Left lung (tissue), 14 donors: ENCODE measurements at regions of chr2 and their contacts with region 1.

Region 1: DNA sequence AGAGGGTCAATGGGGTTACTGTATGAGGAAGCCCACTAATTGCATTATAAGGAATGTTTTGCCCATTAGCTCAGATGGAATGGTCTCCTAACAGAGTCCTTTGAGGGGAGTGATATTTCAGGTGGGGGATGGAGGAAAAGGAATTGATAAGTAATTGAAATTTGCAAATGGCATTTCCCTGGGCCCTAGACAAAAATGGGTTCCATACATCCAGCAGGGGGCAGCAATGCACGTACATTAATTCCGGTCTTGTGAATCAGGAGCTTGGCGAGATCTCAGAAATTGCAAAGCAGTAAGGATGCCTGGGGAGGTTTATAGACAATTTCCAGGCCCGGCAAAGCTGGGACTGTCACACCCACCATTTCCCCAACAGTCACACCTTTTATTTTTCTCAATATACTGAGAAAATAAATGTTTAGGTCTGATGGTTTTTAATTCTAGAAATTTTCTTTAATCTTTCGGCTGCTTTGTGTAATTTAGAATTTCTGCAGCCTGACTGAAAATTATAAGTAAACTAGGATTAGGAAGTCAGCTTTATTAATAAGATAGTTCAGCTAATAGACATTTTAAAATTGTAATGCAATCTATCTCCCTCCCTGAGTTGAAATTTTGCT is 122.8 kb downstream of the LYPD1 start:
- DNase-seq: peak in 3 of 4 donors; percentile 49 to 75 (median 54)
- ATAC-seq: peak; percentile 86
- H3K4me3 ChIP-seq: no peak overlapping the region
- H3K27ac ChIP-seq: no peak overlapping the region
- H3K4me1 ChIP-seq: no peaks in the 10 kb centered on the region
- H3K27me3 ChIP-seq: no peaks in the 10 kb centered on the region
- CTCF ChIP-seq: peak; percentile 59 to 75

Region 2: DNA sequence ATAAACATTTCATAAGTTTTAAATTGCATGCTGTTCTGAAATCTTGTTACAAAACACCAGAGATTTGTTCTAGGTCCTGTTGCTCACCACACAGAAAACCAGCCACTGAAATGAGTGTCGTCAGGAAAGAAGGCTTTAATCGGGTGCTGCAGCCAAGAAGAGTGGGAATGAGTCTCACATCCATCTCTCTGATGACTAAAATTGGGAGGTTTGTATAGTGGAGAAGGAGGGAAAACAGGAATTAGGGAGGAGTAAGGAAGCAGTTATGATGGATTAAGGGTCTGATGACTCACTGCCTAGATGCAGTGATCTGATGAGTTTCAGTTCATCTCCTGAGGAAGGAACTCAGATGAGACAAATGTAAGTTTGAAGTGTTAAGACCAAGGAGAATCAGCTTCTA is 172.6 kb before region 1 on chr2:
- intact Hi-C with region 1: no loop called
- DNase-seq: no peak
- ATAC-seq: peak; percentile 49
- H3K4me3 ChIP-seq: no peak overlapping the region
- H3K27ac ChIP-seq: no peak overlapping the region
- H3K4me1 ChIP-seq: no peaks in the 10 kb centered on the region
- H3K27me3 ChIP-seq: no peaks in the 10 kb centered on the region
- CTCF ChIP-seq: no peak

Region 3: GRCh38 chr2:133171393-133172004 is 624.3 kb after region 1 on chr2:
- intact Hi-C with region 1: loop called in 1 of 2 experiments (anchors 10 kb)
- DNase-seq: peak in 2 of 4 donors; percentile 42 to 63
- ATAC-seq: peak; percentile 79
- H3K4me3 ChIP-seq: no peak overlapping the region
- H3K27ac ChIP-seq: no peak overlapping the region
- H3K4me1 ChIP-seq: no peaks in the 10 kb centered on the region
- H3K27me3 ChIP-seq: no peaks in the 10 kb centered on the region
- CTCF ChIP-seq: peak; percentile 22 to 61